Motor neuron (in vitro differentiated cells): ENCODE measurements at regions of chr11 and their contacts with region 1.

Region 1: DNA sequence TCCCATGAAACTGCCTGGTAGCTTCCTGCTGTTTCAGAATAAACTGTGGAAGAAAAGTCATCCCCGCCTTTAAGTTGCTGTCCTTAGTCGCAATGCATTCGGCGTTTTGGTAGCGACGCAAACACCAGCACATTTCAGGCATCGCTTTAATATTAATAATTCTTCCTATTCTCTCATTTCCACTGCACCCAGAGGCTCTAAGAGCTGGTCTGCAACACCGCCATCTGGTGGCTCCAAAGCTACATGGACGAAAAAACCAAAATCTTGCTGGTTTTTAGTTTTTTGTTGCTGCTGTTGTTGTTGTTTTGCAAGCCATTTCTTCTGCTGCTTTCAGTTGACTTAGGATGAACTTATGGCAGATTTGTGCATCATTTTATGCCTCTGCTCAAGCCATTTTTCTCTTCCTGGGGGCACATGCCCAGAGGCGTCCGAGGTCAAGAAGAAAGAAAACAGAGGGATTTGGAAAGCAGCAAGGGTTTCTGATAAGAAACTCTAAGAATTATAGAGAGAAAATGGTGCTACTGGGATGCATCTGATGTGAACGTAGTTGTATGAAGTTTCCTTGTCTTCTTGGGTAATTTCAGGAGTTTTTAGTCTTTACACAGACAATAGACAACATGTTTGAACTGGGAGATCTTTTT is 345.4 kb upstream of the KIRREL3 start:
- ATAC-seq: peak in 2 of 8 experiments; percentile 37
- H3K4me3 ChIP-seq: no peak overlapping the region
- H3K27ac ChIP-seq: no peak overlapping the region
- H3K4me1 ChIP-seq: no peaks in the 10 kb centered on the region

Region 2: GRCh38 chr11:126440792-126441514 is 905.0 kb before region 1 on chr11:
- in situ Hi-C with region 1: loop called in 2 of 9 experiments (anchors 25 kb)
- ATAC-seq: peak; percentile 78 to 95 (median 82)
- H3K4me3 ChIP-seq: no peak overlapping the region
- H3K27ac ChIP-seq: no peak overlapping the region
- H3K4me1 ChIP-seq: peaks cover 15 to 21% of the 10 kb centered on the region in 2 donors

Region 3: DNA sequence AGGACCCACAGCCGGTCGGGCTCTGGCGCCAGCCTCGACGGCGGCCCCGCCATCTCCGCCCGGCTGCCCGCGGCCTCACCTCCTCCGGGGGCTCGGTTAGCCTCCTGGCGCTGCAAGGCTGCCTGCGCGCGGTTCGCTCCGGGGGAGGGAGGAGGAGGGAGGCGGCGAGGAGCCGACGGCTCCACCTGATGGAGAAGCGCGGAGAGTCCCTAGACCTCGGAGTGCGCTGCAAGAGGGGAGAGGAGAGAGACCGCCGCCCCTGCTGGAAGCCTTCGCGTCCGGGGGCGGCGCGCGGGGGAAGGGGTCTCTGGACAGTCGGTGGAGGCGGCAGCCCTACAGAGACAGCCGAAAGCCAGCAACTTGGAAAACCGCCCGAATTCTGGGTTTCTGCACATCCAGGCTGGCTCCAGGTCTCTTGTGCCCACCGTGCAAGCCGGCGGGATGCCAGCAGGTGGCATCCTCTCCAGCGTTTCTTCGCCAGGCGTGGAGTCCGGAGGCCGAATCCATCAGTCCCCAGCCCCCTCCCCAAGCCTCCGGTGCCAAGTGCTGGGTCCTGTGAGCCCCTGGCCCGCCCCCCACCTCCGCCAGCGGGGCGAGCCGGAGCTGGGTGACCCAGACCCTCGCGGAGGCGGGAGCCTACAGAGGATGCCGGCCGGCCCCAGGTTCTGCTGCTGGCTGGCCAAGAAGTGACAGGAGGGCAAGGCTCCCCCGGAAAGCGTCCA is 342.5 kb before region 1 on chr11:
- in situ Hi-C with region 1: loop called in 2 of 9 experiments (anchors 25 kb)
- ATAC-seq: peak; percentile 62 to 91 (median 90)
- H3K4me3 ChIP-seq: peak overlapping the region; percentile 23 to 38 (median 32)
- H3K27ac ChIP-seq: no peak overlapping the region
- H3K4me1 ChIP-seq: peaks cover 30 to 32% of the 10 kb centered on the region in 2 donors

Region 4: DNA sequence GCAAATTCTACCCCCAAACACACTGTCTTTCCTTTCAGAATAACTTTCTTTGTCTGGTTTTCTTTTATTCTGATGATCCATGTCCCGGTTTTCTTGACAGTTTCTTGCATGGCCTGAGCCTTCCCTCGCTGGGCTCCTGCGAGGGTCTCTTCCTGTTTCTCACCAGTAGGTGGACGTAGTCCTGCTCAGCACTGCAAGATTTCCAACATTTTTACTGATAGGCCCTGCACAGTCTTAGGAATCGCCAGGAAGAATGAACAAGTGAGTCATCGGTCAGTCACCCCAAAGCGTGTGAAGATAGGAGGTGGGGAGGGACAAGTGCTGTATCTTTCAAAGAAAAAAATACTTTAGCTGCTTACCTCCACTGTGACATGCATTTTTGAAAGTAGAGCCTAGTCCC is 328.5 kb before region 1 on chr11:
- in situ Hi-C with region 1: loop called in 3 of 9 experiments (anchors 10 to 25 kb)
- ATAC-seq: peak; percentile 38 to 99 (median 96)
- H3K4me3 ChIP-seq: no peak overlapping the region
- H3K27ac ChIP-seq: no peak overlapping the region
- H3K4me1 ChIP-seq: peaks cover 0 to 3% of the 10 kb centered on the region in 2 donors

Region 5: GRCh38 chr11:127620671-127621070 is 274.7 kb after region 1 on chr11:
- in situ Hi-C with region 1: no loop called
- ATAC-seq: no peak
- H3K4me3 ChIP-seq: no peak overlapping the region
- H3K27ac ChIP-seq: no peak overlapping the region
- H3K4me1 ChIP-seq: peaks cover 0 to 1% of the 10 kb centered on the region in 2 donors